Activated CD4-positive, alpha-beta T cell treated with anti-CD3 and anti-CD28 coated beads, Interleukin-2, amount 10 ng/mL, durations not matched to agents 7 days and 5 days (primary cell): ENCODE measurements at regions of chr6 and their contacts with region 1.

Region 1: GRCh38 chr6:52162940-52163908 is 23.0 kb upstream of the IL17A start:
- DNase-seq: peak; percentile 17
- H3K4me3 Mint-ChIP-seq: no peak overlapping the region
- H3K27ac Mint-ChIP-seq: no peak overlapping the region
- H3K4me1 Mint-ChIP-seq: peaks cover 11% of the 10 kb centered on the region
- H3K27me3 Mint-ChIP-seq: peaks cover 15% of the 10 kb centered on the region

Region 2: GRCh38 chr6:52233975-52234823 is 71.0 kb after region 1 on chr6:
- CTCF ChIA-PET with region 1: interaction called, 11 read pairs
- POLR2A ChIA-PET with region 1: no interaction called
- DNase-seq: peak; percentile 14
- H3K4me3 Mint-ChIP-seq: no peak overlapping the region
- H3K27ac Mint-ChIP-seq: no peak overlapping the region
- H3K4me1 Mint-ChIP-seq: peaks cover 12% of the 10 kb centered on the region
- H3K27me3 Mint-ChIP-seq: peaks cover 66% of the 10 kb centered on the region

Region 3: GRCh38 chr6:52263709-52264540 is 100.7 kb after region 1 on chr6:
- CTCF ChIA-PET with region 1: interaction called, 28 read pairs
- POLR2A ChIA-PET with region 1: no interaction called
- DNase-seq: peak; percentile 80
- H3K4me3 Mint-ChIP-seq: no peak overlapping the region
- H3K27ac Mint-ChIP-seq: peak overlapping the region; percentile 47
- H3K4me1 Mint-ChIP-seq: peaks cover 23% of the 10 kb centered on the region
- H3K27me3 Mint-ChIP-seq: no peaks in the 10 kb centered on the region